ENCODE measurements at regions of chr10 and their contacts with region 1.

Region 1: GRCh38 chr10:77004917-77005564 is 632.6 kb downstream of the KCNMA1 start:
- DNase-seq: peak in 1 of 2 donors; percentile 54
- ATAC-seq: peak; percentile 68 to 83 (median 77)
- H3K4me3 ChIP-seq: no peak overlapping the region
- H3K27ac ChIP-seq: no peak overlapping the region
- H3K4me1 ChIP-seq: peaks cover 0 to 5% (median 0%) of the 10 kb centered on the region in 9 donors
- H3K27me3 ChIP-seq: peaks cover 0 to 5% (median 0%) of the 10 kb centered on the region in 7 donors
- CTCF ChIP-seq: peak; percentile 58 to 87 (median 79)

Region 2: GRCh38 chr10:76297780-76298281 is 707.2 kb before region 1 on chr10:
- intact Hi-C with region 1: loop called in 1 of 10 experiments (anchors 10 kb)
- DNase-seq: no peak
- ATAC-seq: no peak
- H3K4me3 ChIP-seq: no peak overlapping the region
- H3K27ac ChIP-seq: no peak overlapping the region
- H3K4me1 ChIP-seq: peaks cover 0 to 11% (median 1%) of the 10 kb centered on the region in 9 donors
- H3K27me3 ChIP-seq: no peaks in the 10 kb centered on the region
- CTCF ChIP-seq: no peak

Region 3: GRCh38 chr10:77105761-77106221 is 100.8 kb after region 1 on chr10:
- intact Hi-C with region 1: loop called in 2 of 10 experiments (anchors 5 kb)
- DNase-seq: no peak
- ATAC-seq: peak in 6 of 8 donors; percentile 34 to 53 (median 52)
- H3K4me3 ChIP-seq: no peak overlapping the region
- H3K27ac ChIP-seq: peak overlapping the region in 8 of 10 donors; percentile 22 to 65 (median 50)
- H3K4me1 ChIP-seq: peaks cover 0 to 29% (median 6%) of the 10 kb centered on the region in 9 donors
- H3K27me3 ChIP-seq: peaks cover 0 to 6% (median 0%) of the 10 kb centered on the region in 7 donors
- CTCF ChIP-seq: no peak

Region 4: DNA sequence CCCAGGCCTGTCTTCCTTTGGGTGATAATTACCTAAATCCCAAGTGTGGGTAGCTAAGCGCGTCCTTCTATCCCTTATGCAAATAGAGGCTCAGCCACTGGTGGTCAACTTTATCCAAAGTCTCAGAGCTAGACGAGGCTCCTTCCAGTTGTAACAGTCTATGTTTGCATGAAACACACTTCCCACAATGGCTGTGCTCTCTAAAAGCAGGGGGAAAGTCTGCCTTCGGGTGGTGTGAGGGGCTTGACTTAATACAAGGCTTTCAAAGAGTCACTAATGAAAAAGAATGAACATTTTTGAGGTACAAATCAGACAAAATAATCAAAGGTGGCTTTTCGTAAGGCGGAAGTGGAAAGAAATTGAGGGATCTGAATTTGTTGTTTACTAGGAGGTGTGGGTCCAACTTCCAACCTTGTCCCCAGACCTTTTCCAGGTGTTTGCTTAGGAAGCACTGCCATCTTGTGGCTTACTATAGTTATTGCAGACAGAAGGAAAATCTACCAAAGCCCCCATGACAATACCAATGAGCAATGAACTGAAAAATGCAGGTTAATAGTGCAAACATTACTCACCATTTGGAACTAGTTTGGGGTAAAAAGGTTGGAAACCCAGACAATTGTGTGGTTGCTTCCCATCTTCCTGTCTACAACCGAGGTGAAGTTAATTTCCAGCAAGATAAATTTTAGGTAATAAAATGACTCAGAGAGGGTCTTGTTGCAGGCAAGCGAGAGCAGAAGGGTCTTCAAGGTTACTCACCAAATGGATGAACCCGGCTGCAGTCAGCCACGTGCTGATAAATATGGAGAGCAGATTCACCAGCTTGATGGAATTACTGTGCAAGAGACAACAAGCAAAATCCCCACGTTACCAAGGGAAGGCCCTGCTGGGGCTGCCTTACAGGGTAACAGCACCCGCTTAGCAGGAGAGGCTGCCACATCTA is 106.8 kb after region 1 on chr10:
- intact Hi-C with region 1: loop called in 2 of 10 experiments (anchors 5 kb)
- DNase-seq: no peak
- ATAC-seq: peak in 6 of 8 donors; percentile 55 to 74 (median 70)
- H3K4me3 ChIP-seq: no peak overlapping the region
- H3K27ac ChIP-seq: no peak overlapping the region
- H3K4me1 ChIP-seq: peaks cover 0 to 12% (median 0%) of the 10 kb centered on the region in 9 donors
- H3K27me3 ChIP-seq: peaks cover 0 to 23% (median 0%) of the 10 kb centered on the region in 7 donors
- CTCF ChIP-seq: peak; percentile 65 to 86 (median 81)